ENCODE measurements at regions of chr3 and their contacts with region 1.

Region 1: DNA sequence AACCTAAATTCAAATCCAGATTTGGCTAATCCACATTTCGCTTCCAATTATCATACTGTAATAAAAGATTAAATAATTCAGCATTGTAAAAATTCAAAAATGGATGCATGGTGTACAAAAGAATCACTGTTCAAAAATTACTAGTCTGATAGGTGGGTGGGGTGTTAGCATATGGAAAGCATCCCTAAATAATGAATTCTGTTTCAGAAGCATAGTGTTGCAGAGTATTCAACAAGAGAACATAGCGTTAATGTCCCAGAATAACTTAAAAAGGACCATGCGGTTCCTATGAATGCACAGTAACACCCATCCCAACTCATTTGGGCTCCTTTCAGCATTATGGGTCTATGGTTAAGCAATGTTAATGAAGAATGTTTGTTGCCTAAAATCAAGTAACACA is 51.1 kb downstream of the MORC1 start:
- DNase-seq: no peak
- H3K4me3 ChIP-seq: no peak overlapping the region
- H3K27ac ChIP-seq: no peak overlapping the region
- H3K4me1 ChIP-seq: peaks cover 2% of the 10 kb centered on the region
- CTCF ChIP-seq: no peak

Region 2: DNA sequence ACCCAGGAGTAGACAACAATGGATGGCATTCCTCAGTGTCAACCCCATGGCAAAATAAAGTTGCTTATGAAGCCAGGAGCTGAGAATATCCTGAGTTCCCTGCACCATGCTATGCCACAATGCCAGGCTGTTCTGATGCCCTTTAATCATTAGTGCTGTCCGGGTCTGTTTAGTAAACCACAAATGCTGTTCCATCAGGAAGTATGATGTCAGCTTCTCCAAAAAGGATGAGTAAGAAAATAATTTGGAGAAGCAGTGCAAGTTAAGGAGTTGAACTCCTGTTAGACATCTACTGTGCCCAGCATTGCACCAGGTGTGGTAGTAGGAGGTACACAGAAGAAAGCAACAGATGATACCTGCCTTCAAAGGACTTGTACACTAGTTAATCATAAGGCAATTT is 45.3 kb before region 1 on chr3:
- CTCF ChIA-PET with region 1: no interaction called
- POLR2A ChIA-PET with region 1: no interaction called
- intact Hi-C with region 1: no loop called
- DNase-seq: no peak
- H3K4me3 ChIP-seq: no peak overlapping the region
- H3K27ac ChIP-seq: no peak overlapping the region
- H3K4me1 ChIP-seq: no peaks in the 10 kb centered on the region
- CTCF ChIP-seq: no peak

Region 3: DNA sequence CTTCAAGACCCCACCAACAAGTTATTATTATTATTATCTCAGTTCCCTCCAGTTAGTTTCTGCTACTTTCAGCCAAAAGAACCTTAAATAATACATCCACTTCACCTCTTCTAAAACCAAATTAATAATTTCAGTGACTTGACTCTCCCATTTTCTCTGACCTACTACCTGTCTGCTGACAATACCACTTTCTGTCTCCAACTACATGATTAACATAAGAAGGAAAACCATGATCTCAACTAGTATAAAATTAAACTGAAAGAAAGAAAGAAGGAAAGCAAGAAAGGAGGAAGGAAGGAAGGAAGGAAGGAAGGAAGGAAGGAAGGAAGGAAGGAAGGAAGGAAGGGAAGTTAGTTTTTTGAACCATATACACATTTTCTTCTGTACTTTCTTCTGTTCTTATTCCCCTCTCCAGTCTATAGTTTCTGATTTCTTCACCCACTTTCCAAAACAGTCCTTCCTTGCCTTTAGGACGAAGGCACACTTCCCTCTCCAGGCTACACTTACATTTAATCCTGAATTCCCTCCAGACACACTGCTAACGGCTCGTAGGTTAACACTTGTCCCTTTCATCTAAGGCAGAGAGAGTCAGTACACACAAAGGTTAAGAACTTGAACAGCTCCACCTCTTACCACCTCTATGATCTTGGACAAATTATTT is 33.7 kb before region 1 on chr3:
- CTCF ChIA-PET with region 1: no interaction called
- POLR2A ChIA-PET with region 1: no interaction called
- intact Hi-C with region 1: loop called (anchors 5 kb)
- DNase-seq: no peak
- H3K4me3 ChIP-seq: no peak overlapping the region
- H3K27ac ChIP-seq: no peak overlapping the region
- H3K4me1 ChIP-seq: no peaks in the 10 kb centered on the region
- CTCF ChIP-seq: no peak

Region 4: DNA sequence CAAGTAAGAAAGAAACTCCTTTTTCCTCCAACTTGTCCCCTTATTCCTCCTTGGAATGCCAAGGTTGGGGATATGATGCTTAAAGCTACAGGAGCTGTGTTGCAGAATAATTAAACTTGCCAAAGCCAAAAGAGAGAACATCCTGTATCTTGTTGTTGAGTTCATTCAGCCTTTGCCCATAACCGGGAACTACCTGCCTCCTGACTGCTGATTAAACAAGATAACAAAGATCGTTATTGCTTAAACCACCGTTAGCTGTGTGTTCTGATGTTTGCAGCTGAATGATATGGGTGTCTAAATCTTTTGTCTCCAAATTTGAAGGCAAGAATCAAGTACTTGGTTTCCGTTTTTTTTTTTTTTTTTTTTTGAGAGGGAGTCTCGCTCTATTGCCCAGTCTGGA is 187.9 kb after region 1 on chr3:
- CTCF ChIA-PET with region 1: no interaction called
- POLR2A ChIA-PET with region 1: no interaction called
- intact Hi-C with region 1: no loop called
- DNase-seq: no peak
- H3K4me3 ChIP-seq: no peak overlapping the region
- H3K27ac ChIP-seq: no peak overlapping the region
- H3K4me1 ChIP-seq: no peaks in the 10 kb centered on the region
- CTCF ChIP-seq: no peak